Activated T-helper 1 cell treated with anti-CD3 and anti-CD28 coated beads, Interleukin-12 subunit alpha, Interleukin-12 subunit beta, Interleukin-2, Interleukin-4 antibody, amounts not matched to agents 30 ng/mL and 10 ng/mL and 1 ng/mL, durations not matched to agents 14 hours and 24 hours and 36 hours (primary cell): ENCODE measurements at regions of chr1 and their contacts with region 1.

Region 1: DNA sequence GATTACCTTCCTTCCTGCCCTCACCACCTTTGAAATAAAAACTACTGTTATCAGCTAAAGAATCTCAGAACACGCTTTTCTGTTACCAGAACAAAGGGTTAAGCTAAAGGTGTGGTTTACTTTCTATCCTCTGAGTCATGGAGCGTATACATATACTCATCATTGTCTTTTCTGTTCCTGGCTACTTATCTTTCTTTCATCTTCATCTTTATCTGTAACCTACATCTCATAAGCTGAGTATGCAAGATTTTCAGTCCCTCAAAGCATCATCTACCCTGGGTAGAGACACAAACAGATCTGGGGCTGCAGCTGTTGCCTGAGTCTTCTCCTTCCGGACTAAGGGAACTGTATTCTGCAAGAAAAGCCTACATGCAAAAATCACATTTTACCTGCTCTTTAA is 75.6 kb downstream of the LMO4 start:
- DNase-seq: no peak
- H3K4me3 Mint-ChIP-seq: no peak overlapping the region
- H3K27ac Mint-ChIP-seq: peak overlapping the region; percentile 27
- H3K4me1 Mint-ChIP-seq: peaks cover 26% of the 10 kb centered on the region
- H3K27me3 Mint-ChIP-seq: peaks cover 19% of the 10 kb centered on the region

Region 2: DNA sequence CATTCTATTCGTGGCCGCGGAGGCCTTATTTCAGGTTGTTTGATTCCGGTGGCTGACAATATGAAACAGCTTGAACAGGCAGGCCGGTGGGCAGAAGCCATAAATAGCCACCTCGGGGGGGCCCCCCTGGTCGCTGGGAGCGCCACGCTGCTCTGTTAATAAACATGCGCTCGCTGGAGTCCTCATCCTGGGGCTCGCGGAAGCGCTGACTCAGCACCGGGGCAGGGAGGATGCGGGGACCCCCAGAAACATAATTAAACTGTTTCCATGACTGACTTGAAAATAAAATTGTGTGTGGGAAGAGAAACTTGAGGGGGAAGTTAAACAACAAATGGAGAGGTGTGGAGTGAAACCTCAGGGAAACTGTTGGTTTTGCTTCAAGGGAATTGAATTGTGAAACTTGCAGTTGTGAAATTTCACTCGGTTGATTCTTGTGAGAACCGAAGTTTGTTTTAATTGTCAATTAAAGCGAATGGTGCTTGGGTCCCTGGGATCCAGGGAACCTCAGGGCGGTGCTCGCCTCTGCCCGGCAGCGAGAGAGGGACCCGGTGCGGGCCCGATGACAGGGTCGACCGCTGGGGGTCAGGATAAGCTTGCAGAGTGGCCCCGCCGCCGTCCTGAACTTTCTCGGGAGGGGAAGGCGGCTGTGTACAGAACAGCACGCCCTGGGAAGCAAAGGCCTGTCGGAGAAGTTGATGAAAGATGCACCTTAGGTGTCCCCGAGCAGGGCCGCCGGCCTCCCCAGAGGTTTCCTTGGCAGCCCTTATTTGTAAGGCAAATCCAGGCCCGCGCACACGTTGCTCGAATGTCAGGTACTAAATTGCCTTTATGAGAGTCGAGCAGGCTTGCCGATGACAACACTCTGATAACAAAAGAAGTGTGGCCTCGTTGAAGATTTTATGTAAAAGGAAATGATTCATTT is 252.5 kb before region 1 on chr1:
- intact Hi-C with region 1: loop called (anchors 2 kb)
- DNase-seq: peak; percentile 5
- H3K4me3 Mint-ChIP-seq: peak overlapping the region; percentile 65
- H3K27ac Mint-ChIP-seq: peak overlapping the region; percentile 25
- H3K4me1 Mint-ChIP-seq: peaks cover 18% of the 10 kb centered on the region
- H3K27me3 Mint-ChIP-seq: peaks cover 40% of the 10 kb centered on the region

Region 3: DNA sequence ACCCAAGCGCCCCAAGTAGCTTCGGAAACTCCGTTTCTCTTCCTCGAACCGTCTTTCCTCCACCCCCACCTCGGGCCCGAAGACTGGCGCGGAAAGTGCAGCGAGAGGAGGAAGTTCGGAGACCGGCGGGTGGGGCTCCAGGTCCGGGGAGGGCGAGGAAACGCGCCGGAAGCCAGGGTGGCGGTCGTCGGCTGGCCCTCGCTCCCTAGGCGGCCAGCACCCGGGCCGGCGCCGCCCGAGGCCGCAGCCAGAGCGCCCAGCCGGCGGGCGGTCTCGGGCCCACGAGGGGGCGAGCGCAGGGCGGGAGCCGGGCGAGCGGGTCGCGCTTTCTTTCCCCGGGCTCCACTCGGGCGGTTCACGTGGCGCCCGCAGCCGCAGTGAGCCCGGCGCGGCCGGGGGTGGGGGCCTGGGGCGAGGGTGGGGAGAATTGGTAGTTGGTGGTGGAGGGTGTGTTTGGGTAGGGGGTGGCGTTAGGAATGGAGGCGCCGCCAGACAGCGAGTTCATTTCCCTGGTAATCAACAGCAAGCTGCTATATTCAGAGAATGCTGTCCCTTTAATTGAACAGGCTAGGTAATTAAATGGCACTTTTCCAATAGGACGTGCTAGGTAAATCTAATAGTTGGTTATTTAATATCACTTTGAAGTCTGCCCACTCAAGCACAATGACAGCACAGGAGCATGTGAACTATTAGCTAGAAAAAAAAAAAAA is 69.0 kb before region 1 on chr1:
- intact Hi-C with region 1: loop called (anchors 1 kb)
- DNase-seq: peak; percentile 66
- H3K4me3 Mint-ChIP-seq: peak overlapping the region; percentile 89
- H3K27ac Mint-ChIP-seq: peak overlapping the region; percentile 99
- H3K4me1 Mint-ChIP-seq: peaks cover 67% of the 10 kb centered on the region
- H3K27me3 Mint-ChIP-seq: no peaks in the 10 kb centered on the region

Region 4: DNA sequence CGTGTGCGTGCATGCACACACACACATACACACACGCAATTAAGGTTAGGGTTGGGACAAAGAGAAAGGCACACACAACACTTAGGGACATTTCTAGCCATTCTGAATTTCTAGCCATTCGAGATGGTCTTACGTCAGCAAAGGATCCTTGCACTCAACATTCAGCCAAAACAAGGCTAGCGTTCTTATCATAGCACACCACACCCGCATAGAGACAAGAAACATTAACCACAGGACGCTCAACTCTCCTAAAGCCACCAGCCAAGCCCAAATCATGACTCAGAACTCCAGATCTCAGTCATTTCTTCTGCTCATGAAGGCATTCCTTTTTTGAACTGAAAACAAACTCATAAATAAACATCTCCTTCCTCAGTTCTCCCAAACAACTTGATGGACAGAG is 31.2 kb after region 1 on chr1:
- intact Hi-C with region 1: loop called (anchors 1 kb)
- DNase-seq: no peak
- H3K4me3 Mint-ChIP-seq: no peak overlapping the region
- H3K27ac Mint-ChIP-seq: no peak overlapping the region
- H3K4me1 Mint-ChIP-seq: peaks cover 11% of the 10 kb centered on the region
- H3K27me3 Mint-ChIP-seq: peaks cover 14% of the 10 kb centered on the region

Region 5: GRCh38 chr1:87598429-87598828 is 194.1 kb after region 1 on chr1:
- intact Hi-C with region 1: no loop called
- DNase-seq: no peak
- H3K4me3 Mint-ChIP-seq: no peak overlapping the region
- H3K27ac Mint-ChIP-seq: no peak overlapping the region
- H3K4me1 Mint-ChIP-seq: no peaks in the 10 kb centered on the region
- H3K27me3 Mint-ChIP-seq: peaks cover 1% of the 10 kb centered on the region